ENCODE measurements at regions of chr19 and their contacts with region 1.

Region 1: DNA sequence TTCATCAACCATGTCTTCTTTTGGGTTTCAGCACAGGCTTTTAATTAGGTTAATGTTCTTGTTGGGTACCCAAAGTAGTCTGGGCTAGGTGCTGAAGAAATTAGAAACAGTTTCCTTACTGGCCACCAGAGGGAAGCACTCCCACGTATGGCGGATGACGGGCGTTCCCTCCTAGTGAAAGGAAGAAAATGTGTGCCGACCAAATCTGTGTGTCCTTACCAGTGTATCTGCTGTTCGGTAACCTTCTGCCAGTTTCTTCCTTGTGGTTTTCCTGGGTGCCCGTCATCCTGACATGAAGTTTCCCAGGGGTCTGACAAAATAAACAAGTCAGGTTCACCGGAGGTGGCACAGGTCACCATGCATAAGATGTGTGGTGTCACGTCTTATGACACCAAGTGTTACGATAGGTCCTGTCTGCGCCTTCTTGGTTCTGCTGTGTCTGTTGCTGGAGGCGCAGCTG is 6.0 kb upstream of the WDR88 start:
- DNase-seq: peak; percentile 33 to 82 (median 39)
- ATAC-seq: peak; percentile 98
- H3K4me3 ChIP-seq: no peak overlapping the region
- H3K4me3 Mint-ChIP-seq: no peak overlapping the region
- H3K27ac ChIP-seq: no peak overlapping the region
- H3K27ac Mint-ChIP-seq: no peak overlapping the region
- H3K4me1 ChIP-seq: peaks cover 4% of the 10 kb centered on the region
- H3K4me1 Mint-ChIP-seq: peaks cover 8% of the 10 kb centered on the region
- H3K27me3 ChIP-seq: no peaks in the 10 kb centered on the region
- H3K27me3 Mint-ChIP-seq: no peaks in the 10 kb centered on the region
- CTCF ChIP-seq: peak; percentile 85

Region 2: GRCh38 chr19:33186431-33187182 is 60.6 kb after region 1 on chr19:
- CTCF ChIA-PET with region 1: interaction called, 26 read pairs
- POLR2A ChIA-PET with region 1: no interaction called
- intact Hi-C with region 1: no loop called
- DNase-seq: peak in 1 of 14 experiments; percentile 25
- ATAC-seq: no peak
- H3K4me3 ChIP-seq: no peak overlapping the region
- H3K4me3 Mint-ChIP-seq: no peak overlapping the region
- H3K27ac ChIP-seq: no peak overlapping the region
- H3K27ac Mint-ChIP-seq: no peak overlapping the region
- H3K4me1 ChIP-seq: peaks cover 5% of the 10 kb centered on the region
- H3K4me1 Mint-ChIP-seq: peaks cover 8% of the 10 kb centered on the region
- H3K27me3 ChIP-seq: peaks cover 0 to under 1% of the 10 kb centered on the region in 2 experiments
- H3K27me3 Mint-ChIP-seq: peaks cover 13% of the 10 kb centered on the region
- CTCF ChIP-seq: no peak

Measured in CD4-positive, alpha-beta T cell (primary cell).